Activated T-helper 1 cell treated with anti-CD3 and anti-CD28 coated beads, Interleukin-12 subunit alpha, Interleukin-12 subunit beta, Interleukin-2, Interleukin-4 antibody, amounts not matched to agents 30 ng/mL and 10 ng/mL and 1 ng/mL, durations not matched to agents 14 hours and 24 hours and 36 hours (primary cell): ENCODE measurements at regions of chr22 and their contacts with region 1.

Region 1: GRCh38 chr22:37282385-37282677 is at the start of gene CYTH4:
- DNase-seq: peak; percentile 74
- H3K4me3 Mint-ChIP-seq: peak within 1 kb of the TSS; percentile 88
- H3K27ac Mint-ChIP-seq: peak within 1 kb of the TSS; percentile 99
- H3K4me1 Mint-ChIP-seq: peaks cover 65% of the 10 kb centered on the region
- H3K27me3 Mint-ChIP-seq: no peaks in the 10 kb centered on the region
- total RNA-seq, gene CYTH4: 49.5 and 57.1 TPM in 2 replicates

Region 2: DNA sequence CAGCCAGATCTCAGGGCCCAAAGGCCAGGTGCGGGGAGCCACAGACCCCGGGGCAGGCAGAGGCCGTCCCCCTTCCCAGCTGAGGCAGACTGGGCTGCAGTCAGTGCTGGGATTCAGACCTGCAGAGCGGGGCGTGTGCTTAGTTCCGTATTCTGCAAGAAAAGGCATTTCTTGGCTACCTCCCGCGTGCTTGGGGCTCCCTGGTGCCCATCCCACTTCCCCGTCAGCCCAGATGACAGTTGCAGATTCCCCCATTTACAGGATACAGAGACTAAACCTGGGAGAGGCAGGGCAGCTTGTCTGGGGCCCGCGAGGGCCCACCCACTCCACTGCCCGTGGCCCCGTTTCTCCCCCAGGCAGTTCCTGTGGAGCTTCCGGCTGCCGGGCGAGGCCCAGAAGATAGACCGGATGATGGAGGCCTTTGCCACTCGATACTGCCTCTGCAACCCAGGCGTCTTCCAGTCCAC is 18.3 kb after region 1 on chr22:
- intact Hi-C with region 1: loop called (anchors 1 kb)
- DNase-seq: peak; percentile 40
- H3K4me3 Mint-ChIP-seq: peak overlapping the region; percentile 61
- H3K27ac Mint-ChIP-seq: peak overlapping the region; percentile 89
- H3K4me1 Mint-ChIP-seq: peaks cover 67% of the 10 kb centered on the region
- H3K27me3 Mint-ChIP-seq: no peaks in the 10 kb centered on the region